Left ventricle myocardium inferior (tissue), 1 donor: ENCODE measurements at regions of chr16 and their contacts with region 1.

Region 1: GRCh38 chr16:68328151-68328859 is 17.5 kb downstream of the PRMT7 start:
- DNase-seq: peak; percentile 64
- H3K4me3 ChIP-seq: no peak overlapping the region
- H3K27ac ChIP-seq: no peak overlapping the region
- H3K4me1 ChIP-seq: peaks cover 28% of the 10 kb centered on the region
- H3K27me3 ChIP-seq: no peaks in the 10 kb centered on the region
- CTCF ChIP-seq: peak; percentile 96

Region 2: GRCh38 chr16:68166264-68166663 is 162.0 kb before region 1 on chr16:
- intact Hi-C with region 1: no loop called
- DNase-seq: no peak
- H3K4me3 ChIP-seq: no peak overlapping the region
- H3K27ac ChIP-seq: no peak overlapping the region
- H3K4me1 ChIP-seq: peaks cover 10% of the 10 kb centered on the region
- H3K27me3 ChIP-seq: no peaks in the 10 kb centered on the region
- CTCF ChIP-seq: no peak

Region 3: DNA sequence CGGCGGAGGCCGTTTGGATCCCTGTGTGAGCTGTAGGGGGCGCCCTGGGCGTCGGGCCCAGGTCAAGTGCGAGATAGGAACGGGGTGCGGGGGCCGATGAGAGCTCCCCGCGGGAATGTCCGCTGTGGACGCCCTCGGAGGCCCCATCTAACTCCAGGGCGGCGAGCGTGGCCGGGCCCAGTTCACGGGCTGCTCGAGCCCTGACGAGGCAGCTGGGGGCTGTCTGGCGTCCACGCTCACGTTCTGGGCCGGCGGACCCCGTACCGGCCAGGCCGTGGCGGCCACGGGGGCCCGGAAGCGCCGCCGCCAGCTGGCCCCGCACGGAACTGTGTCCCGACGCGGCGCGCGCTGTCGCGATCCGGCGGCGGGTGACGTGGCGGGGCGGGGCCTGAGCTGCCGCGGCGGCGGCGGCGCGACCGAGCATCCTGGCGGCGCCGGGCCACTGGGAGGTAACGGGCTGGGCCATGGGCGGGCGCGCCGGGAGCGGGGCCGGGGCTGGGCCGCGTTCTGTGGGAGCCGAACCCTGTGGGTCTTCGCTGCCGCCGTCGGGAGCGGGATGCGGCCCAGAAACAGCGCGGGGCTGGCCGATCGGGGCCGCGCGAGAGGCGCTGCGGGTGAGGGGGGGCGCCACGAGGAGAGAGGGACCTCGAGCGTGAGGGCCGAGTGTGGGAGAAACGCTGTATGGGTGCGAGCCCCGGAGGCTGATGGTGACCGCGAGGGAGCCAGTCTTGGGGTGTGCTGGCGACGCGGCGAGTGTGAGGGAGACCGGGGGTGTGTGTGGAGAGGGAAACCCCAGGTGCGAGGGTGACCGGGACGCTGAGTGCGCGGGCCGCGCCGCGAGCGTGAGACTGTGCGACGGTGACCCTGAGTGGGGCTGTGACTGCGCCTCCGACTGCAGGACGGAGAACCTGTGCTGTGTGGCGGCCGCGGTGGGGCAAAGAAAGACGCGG is 63.9 kb before region 1 on chr16 and contains the start of gene SLC7A6:
- intact Hi-C with region 1: loop called (anchors 5 kb)
- DNase-seq: peak; percentile 83
- H3K4me3 ChIP-seq: peak within 1 kb of the TSS; percentile 80
- H3K27ac ChIP-seq: peak within 1 kb of the TSS; percentile 99
- H3K4me1 ChIP-seq: peaks cover 86% of the 10 kb centered on the region
- H3K27me3 ChIP-seq: no peaks in the 10 kb centered on the region
- CTCF ChIP-seq: peak; percentile 80
- total RNA-seq, gene SLC7A6: 44.2 TPM

Region 4: DNA sequence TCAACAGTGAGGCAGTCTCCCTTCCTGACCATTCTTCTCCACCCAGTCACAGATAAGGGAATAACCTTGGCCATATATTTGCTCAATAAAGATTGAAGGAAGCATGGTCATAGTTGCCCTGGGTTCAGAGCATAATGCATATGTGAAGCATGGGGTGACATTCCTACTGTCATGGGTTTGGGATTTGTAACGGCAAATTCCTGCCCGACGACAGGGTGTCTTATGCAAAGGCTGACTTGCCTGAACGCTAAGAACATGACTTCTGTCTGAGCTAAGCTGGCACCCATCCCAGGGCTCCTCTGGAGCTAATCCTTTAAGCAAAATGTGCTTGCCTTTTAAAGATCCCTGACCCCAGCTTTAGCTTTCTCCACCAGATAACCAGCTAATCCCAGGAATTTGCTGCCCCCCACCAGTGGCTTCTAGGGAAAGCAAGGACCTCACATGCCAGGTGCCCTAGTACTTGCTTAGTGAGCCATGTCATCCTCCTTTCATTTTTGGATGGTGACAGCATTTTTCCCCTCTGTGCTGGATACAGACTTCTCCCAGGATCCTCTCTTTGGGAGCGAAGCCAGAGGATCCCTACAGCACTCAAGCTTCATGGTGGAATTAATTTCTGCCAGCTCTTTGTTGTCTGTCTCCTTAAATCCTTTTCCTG is 29.3 kb before region 1 on chr16:
- intact Hi-C with region 1: no loop called
- DNase-seq: peak; percentile 68
- H3K4me3 ChIP-seq: no peak overlapping the region
- H3K27ac ChIP-seq: peak overlapping the region; percentile 73
- H3K4me1 ChIP-seq: peaks cover 63% of the 10 kb centered on the region
- H3K27me3 ChIP-seq: no peaks in the 10 kb centered on the region
- CTCF ChIP-seq: no peak